ENCODE measurements at regions of chr1 and their contacts with region 1.

Region 1: DNA sequence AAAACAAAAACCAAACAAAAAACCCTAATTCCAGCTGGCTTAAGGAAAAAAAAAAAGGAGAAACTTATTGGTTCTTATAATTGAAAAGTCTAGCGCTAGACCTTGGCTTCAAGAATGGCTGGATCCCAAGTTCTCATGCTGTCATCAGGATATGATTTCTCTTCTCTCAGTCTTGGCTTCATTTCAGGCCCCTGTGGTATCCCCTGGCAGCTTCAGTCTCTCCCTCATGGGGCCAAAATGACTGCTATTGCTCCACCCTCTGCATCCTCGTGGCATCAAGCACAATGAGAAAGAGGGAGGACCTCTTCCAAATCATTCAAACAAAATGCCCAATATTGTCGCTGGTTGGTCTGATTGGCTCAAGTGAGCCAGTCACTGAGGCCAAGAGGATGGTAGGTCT is 80.7 kb downstream of the GIPC2 start:
- DNase-seq: no peak
- ATAC-seq: no peak
- H3K4me3 Mint-ChIP-seq: no peak overlapping the region
- H3K27ac Mint-ChIP-seq: no peak overlapping the region
- H3K4me1 Mint-ChIP-seq: no peaks in the 10 kb centered on the region
- H3K27me3 Mint-ChIP-seq: no peaks in the 10 kb centered on the region
- CTCF ChIP-seq: no peak

Region 2: GRCh38 chr1:78607334-78607927 is 480.9 kb after region 1 on chr1:
- CTCF ChIA-PET with region 1: interaction called, 12 read pairs
- POLR2A ChIA-PET with region 1: no interaction called
- intact Hi-C with region 1: loop called (anchors 1 kb)
- DNase-seq: no peak
- ATAC-seq: no peak
- H3K4me3 Mint-ChIP-seq: no peak overlapping the region
- H3K27ac Mint-ChIP-seq: no peak overlapping the region
- H3K4me1 Mint-ChIP-seq: no peaks in the 10 kb centered on the region
- H3K27me3 Mint-ChIP-seq: peaks cover 9% of the 10 kb centered on the region
- CTCF ChIP-seq: no peak

Region 3: DNA sequence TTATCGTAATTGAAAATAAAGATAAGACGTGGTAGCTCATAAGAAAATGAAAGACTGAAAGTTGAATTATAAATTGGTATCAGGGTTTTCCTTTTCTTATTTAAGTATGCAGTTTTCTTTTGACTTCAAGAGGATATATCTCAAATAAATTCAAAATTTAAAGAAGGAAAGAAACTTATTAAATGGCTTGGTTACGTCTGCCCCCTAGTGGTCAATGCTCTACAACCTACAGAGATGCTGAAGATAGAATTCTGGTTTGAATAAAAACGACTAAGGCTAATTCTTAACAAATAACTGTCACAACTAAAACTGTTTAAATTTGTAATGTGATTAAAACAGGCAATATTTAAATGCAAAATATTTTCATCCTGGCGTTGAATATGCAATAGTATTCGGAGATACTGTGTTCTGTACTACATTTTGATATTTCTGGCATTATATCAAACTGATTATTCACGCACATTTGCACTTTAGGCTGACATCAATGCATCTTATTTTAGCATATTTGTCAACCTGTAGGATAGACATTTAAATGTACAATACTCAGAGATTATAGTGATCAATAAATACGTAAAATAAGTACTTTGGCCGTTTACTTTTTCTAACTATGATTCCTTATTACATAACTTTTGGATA is 550.0 kb after region 1 on chr1:
- CTCF ChIA-PET with region 1: interaction called, 12 read pairs
- POLR2A ChIA-PET with region 1: no interaction called
- intact Hi-C with region 1: loop called (anchors 1 kb)
- DNase-seq: no peak
- ATAC-seq: no peak
- H3K4me3 Mint-ChIP-seq: no peak overlapping the region
- H3K27ac Mint-ChIP-seq: no peak overlapping the region
- H3K4me1 Mint-ChIP-seq: no peaks in the 10 kb centered on the region
- H3K27me3 Mint-ChIP-seq: no peaks in the 10 kb centered on the region
- CTCF ChIP-seq: peak; percentile 60

Measured in activated B cell treated with CpG ODN at 0.5 μM for 24 hours (primary cell).